Common myeloid progenitor, CD34-positive (primary cell): ENCODE measurements at regions of chr6 and their contacts with region 1.

Region 1: DNA sequence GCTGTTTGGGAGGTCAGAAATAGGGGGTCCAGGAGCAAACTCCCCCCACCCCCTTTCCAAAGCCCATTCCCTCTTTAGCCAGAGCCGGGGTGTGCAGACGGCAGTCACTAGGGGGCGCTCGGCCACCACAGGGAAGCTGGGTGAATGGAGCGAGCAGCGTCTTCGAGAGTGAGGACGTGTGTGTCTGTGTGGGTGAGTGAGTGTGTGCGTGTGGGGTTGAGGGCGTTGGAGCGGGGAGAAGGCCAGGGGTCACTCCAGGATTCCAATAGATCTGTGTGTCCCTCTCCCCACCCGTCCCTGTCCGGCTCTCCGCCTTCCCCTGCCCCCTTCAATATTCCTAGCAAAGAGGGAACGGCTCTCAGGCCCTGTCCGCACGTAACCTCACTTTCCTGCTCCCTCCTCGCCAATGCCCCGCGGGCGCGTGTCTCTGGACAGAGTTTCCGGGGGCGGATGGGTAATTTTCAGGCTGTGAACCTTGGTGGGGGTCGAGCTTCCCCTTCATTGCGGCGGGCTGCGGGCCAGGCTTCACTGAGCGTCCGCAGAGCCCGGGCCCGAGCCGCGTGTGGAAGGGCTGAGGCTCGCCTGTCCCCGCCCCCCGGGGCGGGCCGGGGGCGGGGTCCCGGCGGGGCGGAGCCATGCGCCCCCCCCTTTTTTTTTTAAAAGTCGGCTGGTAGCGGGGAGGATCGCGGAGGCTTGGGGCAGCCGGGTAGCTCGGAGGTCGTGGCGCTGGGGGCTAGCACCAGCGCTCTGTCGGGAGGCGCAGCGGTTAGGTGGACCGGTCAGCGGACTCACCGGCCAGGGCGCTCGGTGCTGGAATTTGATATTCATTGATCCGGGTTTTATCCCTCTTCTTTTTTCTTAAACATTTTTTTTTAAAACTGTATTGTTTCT is at the start of gene VEGFA:
- DNase-seq: peak; percentile 87 to 92 (median 91)
- H3K4me3 ChIP-seq: peak within 1 kb of the TSS; percentile 51 to 86 (median 76)
- H3K27ac ChIP-seq: peak within 1 kb of the TSS in 1 of 2 experiments; percentile 84
- H3K4me1 ChIP-seq: peaks cover 0 to 52% (median 42%) of the 10 kb centered on the region in 4 experiments
- H3K27me3 ChIP-seq: peaks cover 0 to 30% (median 0%) of the 10 kb centered on the region in 5 experiments

Region 2: DNA sequence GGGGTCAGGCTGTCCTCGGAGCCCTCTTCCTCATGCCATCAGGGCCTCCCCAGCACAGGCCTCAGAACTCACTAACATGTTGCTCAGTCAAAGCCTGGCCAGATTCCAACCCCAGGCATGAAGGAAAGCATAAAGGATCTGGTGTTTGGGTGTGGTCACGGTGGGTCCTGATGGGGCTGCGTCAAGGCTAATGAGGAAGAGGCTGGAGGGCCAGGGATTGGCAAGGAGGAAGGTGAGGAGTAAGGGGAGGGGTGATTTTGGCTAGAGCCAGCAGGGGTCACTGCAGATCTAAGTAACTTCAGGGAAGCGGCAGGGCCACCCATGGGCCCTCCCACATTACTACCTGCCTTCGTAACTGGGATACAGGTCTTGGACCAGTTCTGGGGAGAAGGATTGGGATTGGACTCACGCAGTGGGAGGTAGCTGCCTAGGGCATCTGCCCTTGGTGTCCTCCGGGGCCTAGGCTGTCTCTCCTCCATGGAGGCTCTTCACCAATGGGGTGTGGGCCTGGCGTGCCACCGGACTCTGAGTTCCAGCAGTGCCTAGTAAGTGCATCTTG is 46.0 kb before region 1 on chr6:
- CTCF ChIA-PET with region 1: interaction called, 15 read pairs
- POLR2A ChIA-PET with region 1: interaction called, 7 read pairs
- DNase-seq: peak; percentile 79 to 87 (median 81)
- H3K4me3 ChIP-seq: no peak overlapping the region
- H3K27ac ChIP-seq: no peak overlapping the region
- H3K4me1 ChIP-seq: peaks cover 4 to 29% (median 27%) of the 10 kb centered on the region in 4 experiments
- H3K27me3 ChIP-seq: peaks cover 0 to 7% (median 0%) of the 10 kb centered on the region in 5 experiments

Region 3: GRCh38 chr6:43758617-43759050 is 11.1 kb before region 1 on chr6:
- CTCF ChIA-PET with region 1: interaction called, 26 read pairs
- POLR2A ChIA-PET with region 1: no interaction called
- DNase-seq: peak in 2 of 3 donors; percentile 35 to 42
- H3K4me3 ChIP-seq: no peak overlapping the region
- H3K27ac ChIP-seq: no peak overlapping the region
- H3K4me1 ChIP-seq: peaks cover 0 to 6% (median 2%) of the 10 kb centered on the region in 4 experiments
- H3K27me3 ChIP-seq: peaks cover 0 to 3% (median 0%) of the 10 kb centered on the region in 5 experiments

Region 4: GRCh38 chr6:43817192-43817591 is 47.4 kb after region 1 on chr6:
- CTCF ChIA-PET with region 1: interaction called, 51 read pairs
- POLR2A ChIA-PET with region 1: no interaction called
- DNase-seq: peak; percentile 76 to 84 (median 84)
- H3K4me3 ChIP-seq: no peak overlapping the region
- H3K27ac ChIP-seq: no peak overlapping the region
- H3K4me1 ChIP-seq: peaks cover 3 to 42% (median 27%) of the 10 kb centered on the region in 4 experiments
- H3K27me3 ChIP-seq: no peaks in the 10 kb centered on the region

Region 5: GRCh38 chr6:43951063-43951755 is 181.4 kb after region 1 on chr6:
- CTCF ChIA-PET with region 1: interaction called, 22 read pairs
- POLR2A ChIA-PET with region 1: no interaction called
- DNase-seq: peak; percentile 63 to 77 (median 75)
- H3K4me3 ChIP-seq: no peak overlapping the region
- H3K27ac ChIP-seq: no peak overlapping the region
- H3K4me1 ChIP-seq: peaks cover 0 to 5% (median 0%) of the 10 kb centered on the region in 4 experiments
- H3K27me3 ChIP-seq: peaks cover 0 to 2% (median 0%) of the 10 kb centered on the region in 5 experiments